ENCODE measurements at regions of chr3 and their contacts with region 1.

Region 1: DNA sequence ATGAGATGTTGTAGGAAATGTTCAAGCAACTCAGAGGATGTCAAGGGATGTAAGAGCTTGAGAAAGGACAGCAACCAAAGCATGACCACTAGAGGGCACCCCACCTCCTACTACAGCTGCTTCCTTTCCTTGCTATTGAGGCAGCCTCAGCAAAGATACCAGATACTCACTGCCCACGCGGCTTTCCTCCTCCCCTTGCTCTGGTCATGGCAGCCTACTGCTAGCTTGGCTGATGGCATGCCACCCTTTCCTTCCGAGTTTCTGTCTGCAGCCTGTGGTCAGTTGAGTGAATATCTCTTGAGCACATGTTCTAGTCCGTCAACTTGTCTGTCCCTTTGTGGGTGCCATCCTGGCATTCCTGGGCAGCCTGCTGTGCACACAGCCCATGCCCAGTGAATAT is 4.4 kb upstream of the CXCR6 start:
- DNase-seq: peak; percentile 97
- ATAC-seq: peak; percentile 65
- H3K4me3 Mint-ChIP-seq: no peak overlapping the region
- H3K27ac Mint-ChIP-seq: no peak overlapping the region
- H3K4me1 Mint-ChIP-seq: peaks cover 34% of the 10 kb centered on the region
- H3K27me3 Mint-ChIP-seq: peaks cover 2% of the 10 kb centered on the region
- CTCF ChIP-seq: peak; percentile 73

Region 2: DNA sequence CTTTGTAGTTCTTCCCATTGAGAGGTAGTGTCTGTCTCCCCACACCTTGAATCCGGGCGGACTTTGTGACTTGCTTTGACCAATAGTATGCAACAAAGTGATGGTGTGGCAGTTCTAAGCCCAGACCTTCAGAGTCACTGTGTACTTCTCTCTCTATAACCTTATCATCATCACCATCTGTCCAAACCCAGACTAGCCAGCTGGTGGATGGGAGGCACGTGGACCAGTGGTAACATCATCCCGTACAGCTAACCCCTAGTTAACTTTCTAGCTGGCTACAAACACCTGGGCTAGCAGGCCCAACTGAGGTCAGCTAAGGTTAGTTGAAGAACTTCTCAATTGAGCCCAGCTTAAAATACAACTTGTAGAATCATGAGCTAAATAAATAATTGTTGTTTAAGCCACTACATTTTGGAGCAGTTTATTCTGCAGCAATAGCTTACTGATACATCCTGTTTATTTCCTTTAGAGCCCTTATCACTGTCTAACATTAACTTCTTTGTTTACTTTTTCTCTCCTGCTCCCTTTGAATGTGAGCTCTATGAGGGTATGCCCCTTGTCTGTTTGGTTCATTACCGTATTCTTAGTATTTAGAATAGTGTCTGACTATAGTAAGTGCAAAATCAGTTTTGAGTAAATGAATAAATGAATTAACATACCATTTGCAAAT is 64.1 kb before region 1 on chr3:
- CTCF ChIA-PET with region 1: no interaction called
- POLR2A ChIA-PET with region 1: no interaction called
- intact Hi-C with region 1: no loop called
- DNase-seq: no peak
- ATAC-seq: no peak
- H3K4me3 Mint-ChIP-seq: no peak overlapping the region
- H3K27ac Mint-ChIP-seq: no peak overlapping the region
- H3K4me1 Mint-ChIP-seq: peaks cover 26% of the 10 kb centered on the region
- H3K27me3 Mint-ChIP-seq: peaks cover 53% of the 10 kb centered on the region
- CTCF ChIP-seq: no peak

Region 3: GRCh38 chr3:45958321-45958791 is 19.5 kb after region 1 on chr3:
- CTCF ChIA-PET with region 1: interaction called, 20 read pairs
- POLR2A ChIA-PET with region 1: interaction called, 11 read pairs
- intact Hi-C with region 1: no loop called
- DNase-seq: no peak
- ATAC-seq: no peak
- H3K4me3 Mint-ChIP-seq: no peak overlapping the region
- H3K27ac Mint-ChIP-seq: peak overlapping the region; percentile 44
- H3K4me1 Mint-ChIP-seq: peaks cover 31% of the 10 kb centered on the region
- H3K27me3 Mint-ChIP-seq: no peaks in the 10 kb centered on the region
- CTCF ChIP-seq: no peak

Region 4: DNA sequence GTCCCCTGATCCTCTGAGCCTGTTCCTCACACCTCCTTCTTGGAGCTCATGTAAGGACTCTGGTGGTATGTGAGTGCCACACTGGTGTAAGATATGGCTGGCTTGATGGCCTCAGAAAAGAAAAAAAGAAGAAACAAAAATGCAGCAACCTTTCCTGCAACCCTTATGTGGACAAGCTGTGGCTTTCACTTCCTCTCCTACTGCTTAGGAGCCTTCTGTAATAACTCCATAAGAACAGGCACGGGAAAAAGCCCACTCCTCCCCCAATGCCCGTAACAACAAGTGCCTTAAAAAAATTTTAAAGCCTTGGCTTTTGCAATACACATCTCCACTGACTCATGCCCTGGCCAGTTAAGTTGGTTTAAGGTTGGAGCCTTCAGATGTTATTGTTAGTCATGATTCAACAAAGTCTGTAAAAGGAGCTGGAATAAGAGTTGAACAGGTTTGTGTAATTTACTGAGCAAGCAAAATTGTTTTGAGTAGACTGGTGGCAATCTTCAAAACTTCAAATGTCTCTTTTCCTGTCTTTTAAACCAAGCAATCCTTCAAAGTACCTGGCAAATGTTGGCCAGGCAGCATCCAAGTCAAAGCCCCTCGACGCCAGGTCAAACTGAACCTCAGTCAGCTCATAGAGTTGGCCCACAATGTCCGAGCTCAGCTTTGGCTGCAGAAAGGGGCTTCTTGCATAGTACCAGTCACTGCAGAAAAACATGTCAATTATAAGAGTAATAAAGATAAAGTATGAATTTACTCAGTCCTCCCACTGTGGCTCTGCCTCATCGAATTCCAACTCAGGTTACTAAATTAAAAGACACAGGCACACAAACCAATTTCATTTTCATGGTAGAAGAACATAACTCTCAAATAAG is 33.9 kb after region 1 on chr3:
- CTCF ChIA-PET with region 1: interaction called, 11 read pairs
- POLR2A ChIA-PET with region 1: interaction called, 4 read pairs
- intact Hi-C with region 1: loop called (anchors 5 kb)
- DNase-seq: peak; percentile 29
- ATAC-seq: peak; percentile 38
- H3K4me3 Mint-ChIP-seq: no peak overlapping the region
- H3K27ac Mint-ChIP-seq: peak overlapping the region; percentile 60
- H3K4me1 Mint-ChIP-seq: peaks cover 60% of the 10 kb centered on the region
- H3K27me3 Mint-ChIP-seq: no peaks in the 10 kb centered on the region
- CTCF ChIP-seq: no peak

Region 5: GRCh38 chr3:45995236-45996192 is 56.6 kb after region 1 on chr3 and contains the start of gene FYCO1:
- CTCF ChIA-PET with region 1: interaction called, 23 read pairs
- POLR2A ChIA-PET with region 1: interaction called, 8 read pairs
- intact Hi-C with region 1: no loop called
- DNase-seq: peak; percentile 96
- ATAC-seq: peak; percentile 82
- H3K4me3 Mint-ChIP-seq: peak within 1 kb of the TSS; percentile 83
- H3K27ac Mint-ChIP-seq: peak within 1 kb of the TSS; percentile 91
- H3K4me1 Mint-ChIP-seq: peaks cover 46% of the 10 kb centered on the region
- H3K27me3 Mint-ChIP-seq: peaks cover 4% of the 10 kb centered on the region
- CTCF ChIP-seq: no peak
- total RNA-seq, gene FYCO1: 14.1 to 14.5 TPM

Region 6: DNA sequence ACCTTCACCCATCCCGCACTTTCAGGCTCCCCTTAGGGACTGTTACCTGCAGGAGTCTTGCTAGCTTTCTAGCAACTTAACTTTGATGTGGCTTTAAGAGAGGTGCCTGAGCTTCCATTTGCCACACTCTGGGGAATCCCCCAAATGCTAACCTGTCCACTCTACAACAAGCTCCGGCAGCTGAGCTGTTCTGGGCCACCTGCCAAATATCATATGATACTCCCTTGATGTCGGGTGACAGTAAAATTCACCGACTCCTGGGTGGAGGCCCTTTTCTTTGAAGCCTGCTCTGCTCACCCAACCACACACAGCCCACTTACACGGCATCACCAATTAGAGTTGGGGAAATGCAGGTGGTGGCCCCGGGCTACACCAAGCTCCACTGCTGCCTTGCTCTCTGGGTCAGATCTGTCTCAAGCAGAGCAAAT is 126.4 kb after region 1 on chr3:
- CTCF ChIA-PET with region 1: interaction called, 29 read pairs
- POLR2A ChIA-PET with region 1: interaction called, 3 read pairs
- intact Hi-C with region 1: no loop called
- DNase-seq: peak; percentile 95
- ATAC-seq: peak; percentile 94
- H3K4me3 Mint-ChIP-seq: peak overlapping the region; percentile 31
- H3K27ac Mint-ChIP-seq: peak overlapping the region; percentile 66
- H3K4me1 Mint-ChIP-seq: peaks cover 55% of the 10 kb centered on the region
- H3K27me3 Mint-ChIP-seq: peaks cover 27% of the 10 kb centered on the region
- CTCF ChIP-seq: no peak

Measured in activated CD8-positive, alpha-beta T cell treated with anti-CD3 and anti-CD28 coated beads for 36 hours (primary cell).